Activated naive CD4-positive, alpha-beta T cell treated with anti-CD3 and anti-CD28 coated beads for 36 hours (primary cell): ENCODE measurements at regions of chr9 and their contacts with region 1.

Region 1: GRCh38 chr9:114653556-114654159 is 3.9 kb downstream of the TEX53 start:
- DNase-seq: peak; percentile 92
- H3K4me3 Mint-ChIP-seq: no peak overlapping the region
- H3K27ac Mint-ChIP-seq: no peak overlapping the region
- H3K4me1 Mint-ChIP-seq: peaks cover 31% of the 10 kb centered on the region
- H3K27me3 Mint-ChIP-seq: no peaks in the 10 kb centered on the region

Region 2: DNA sequence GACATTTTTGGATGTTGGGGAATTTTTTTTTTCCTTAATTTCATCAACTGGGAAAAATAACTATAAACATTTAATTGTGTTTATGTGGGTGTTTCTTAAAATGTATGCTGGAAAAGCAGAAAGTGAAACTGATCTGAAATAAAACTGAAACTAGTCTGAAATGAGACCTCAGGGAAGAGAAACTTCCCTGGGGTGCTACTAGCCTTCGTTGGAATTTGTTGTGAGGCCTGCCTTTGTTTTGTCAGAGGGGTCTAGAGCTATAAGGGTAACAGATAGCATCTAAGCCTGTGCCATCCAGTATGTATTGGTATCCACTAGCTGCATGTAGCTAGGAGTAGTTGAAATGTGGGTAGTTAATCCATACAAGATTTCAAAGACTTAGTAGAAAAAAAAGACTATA is 767.2 kb before region 1 on chr9:
- CTCF ChIA-PET with region 1: no interaction called
- intact Hi-C with region 1: no loop called
- DNase-seq: no peak
- H3K4me3 Mint-ChIP-seq: no peak overlapping the region
- H3K27ac Mint-ChIP-seq: no peak overlapping the region
- H3K4me1 Mint-ChIP-seq: peaks cover 14% of the 10 kb centered on the region
- H3K27me3 Mint-ChIP-seq: peaks cover 3% of the 10 kb centered on the region

Region 3: GRCh38 chr9:114397848-114398605 is 255.6 kb before region 1 on chr9:
- CTCF ChIA-PET with region 1: interaction called, 19 read pairs
- intact Hi-C with region 1: no loop called
- DNase-seq: peak; percentile 97
- H3K4me3 Mint-ChIP-seq: peak overlapping the region; percentile 94
- H3K27ac Mint-ChIP-seq: peak overlapping the region; percentile 86
- H3K4me1 Mint-ChIP-seq: peaks cover 46% of the 10 kb centered on the region
- H3K27me3 Mint-ChIP-seq: no peaks in the 10 kb centered on the region

Region 4: GRCh38 chr9:114434878-114435311 is 218.8 kb before region 1 on chr9:
- CTCF ChIA-PET with region 1: interaction called, 37 read pairs
- intact Hi-C with region 1: loop called (anchors 1 kb)
- DNase-seq: peak; percentile 37
- H3K4me3 Mint-ChIP-seq: no peak overlapping the region
- H3K27ac Mint-ChIP-seq: no peak overlapping the region
- H3K4me1 Mint-ChIP-seq: peaks cover 2% of the 10 kb centered on the region
- H3K27me3 Mint-ChIP-seq: no peaks in the 10 kb centered on the region

Region 5: GRCh38 chr9:114505187-114506081 is 148.2 kb before region 1 on chr9 and contains the start of gene WHRN:
- CTCF ChIA-PET with region 1: interaction called, 6 read pairs
- intact Hi-C with region 1: loop called (anchors 1 kb)
- DNase-seq: peak; percentile 90
- H3K4me3 Mint-ChIP-seq: peak within 1 kb of the TSS; percentile 76
- H3K27ac Mint-ChIP-seq: no peak within 1 kb of the TSS
- H3K4me1 Mint-ChIP-seq: peaks cover 5% of the 10 kb centered on the region
- H3K27me3 Mint-ChIP-seq: peaks cover 15% of the 10 kb centered on the region
- total RNA-seq, gene WHRN: 1.9 to 2.1 TPM

Region 6: GRCh38 chr9:114587385-114588202 is 66.1 kb before region 1 on chr9 and contains the start of gene ATP6V1G1:
- CTCF ChIA-PET with region 1: interaction called, 47 read pairs
- intact Hi-C with region 1: loop called (anchors 1 kb)
- DNase-seq: peak; percentile 100
- H3K4me3 Mint-ChIP-seq: peak within 1 kb of the TSS; percentile 92
- H3K27ac Mint-ChIP-seq: peak within 1 kb of the TSS; percentile 96
- H3K4me1 Mint-ChIP-seq: peaks cover 43% of the 10 kb centered on the region
- H3K27me3 Mint-ChIP-seq: no peaks in the 10 kb centered on the region
- total RNA-seq, gene ATP6V1G1: 26.7 to 28.8 TPM

Region 7: GRCh38 chr9:114629563-114630090 is 24.0 kb before region 1 on chr9:
- CTCF ChIA-PET with region 1: interaction called, 14 read pairs
- intact Hi-C with region 1: no loop called
- DNase-seq: no peak
- H3K4me3 Mint-ChIP-seq: no peak overlapping the region
- H3K27ac Mint-ChIP-seq: no peak overlapping the region
- H3K4me1 Mint-ChIP-seq: no peaks in the 10 kb centered on the region
- H3K27me3 Mint-ChIP-seq: no peaks in the 10 kb centered on the region

Region 8: DNA sequence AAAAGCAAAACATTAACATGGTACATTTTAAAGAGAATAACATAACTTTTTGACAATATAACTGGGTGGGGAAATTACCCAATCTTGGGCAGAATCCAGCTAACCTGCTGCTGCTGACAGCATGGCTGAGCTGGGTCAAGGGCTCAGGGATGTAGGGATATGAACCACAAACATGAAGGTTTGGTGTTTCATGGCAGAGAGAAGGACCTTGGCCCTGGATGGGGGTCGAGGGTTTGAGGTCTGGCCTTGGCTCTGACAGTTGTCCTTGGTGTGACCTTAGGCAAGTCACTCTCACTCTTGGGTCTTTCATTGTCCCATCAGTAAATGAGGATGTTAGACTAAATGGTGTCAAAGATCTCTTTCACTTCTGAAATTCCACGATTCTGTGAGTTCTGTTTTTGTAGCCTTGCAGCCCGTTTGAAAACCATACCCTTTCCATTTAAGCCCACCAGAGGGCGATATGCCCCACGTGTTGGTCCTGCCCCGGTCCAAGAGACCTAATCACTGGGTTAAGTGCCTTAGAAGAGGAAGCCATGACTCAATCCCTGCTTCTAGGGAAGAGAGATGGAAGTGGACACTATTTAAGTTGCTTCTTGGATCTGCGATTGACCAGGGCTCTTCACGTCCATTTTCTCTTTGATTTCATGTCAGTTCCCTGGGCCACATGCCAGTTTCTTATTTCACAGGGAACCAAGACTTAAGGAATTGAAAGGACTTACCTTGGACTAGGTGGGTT is 85.1 kb after region 1 on chr9:
- CTCF ChIA-PET with region 1: no interaction called
- intact Hi-C with region 1: no loop called
- DNase-seq: peak; percentile 82
- H3K4me3 Mint-ChIP-seq: no peak overlapping the region
- H3K27ac Mint-ChIP-seq: peak overlapping the region; percentile 86
- H3K4me1 Mint-ChIP-seq: peaks cover 56% of the 10 kb centered on the region
- H3K27me3 Mint-ChIP-seq: no peaks in the 10 kb centered on the region